ENCODE measurements at regions of chr2 and their contacts with region 1.

Region 1: DNA sequence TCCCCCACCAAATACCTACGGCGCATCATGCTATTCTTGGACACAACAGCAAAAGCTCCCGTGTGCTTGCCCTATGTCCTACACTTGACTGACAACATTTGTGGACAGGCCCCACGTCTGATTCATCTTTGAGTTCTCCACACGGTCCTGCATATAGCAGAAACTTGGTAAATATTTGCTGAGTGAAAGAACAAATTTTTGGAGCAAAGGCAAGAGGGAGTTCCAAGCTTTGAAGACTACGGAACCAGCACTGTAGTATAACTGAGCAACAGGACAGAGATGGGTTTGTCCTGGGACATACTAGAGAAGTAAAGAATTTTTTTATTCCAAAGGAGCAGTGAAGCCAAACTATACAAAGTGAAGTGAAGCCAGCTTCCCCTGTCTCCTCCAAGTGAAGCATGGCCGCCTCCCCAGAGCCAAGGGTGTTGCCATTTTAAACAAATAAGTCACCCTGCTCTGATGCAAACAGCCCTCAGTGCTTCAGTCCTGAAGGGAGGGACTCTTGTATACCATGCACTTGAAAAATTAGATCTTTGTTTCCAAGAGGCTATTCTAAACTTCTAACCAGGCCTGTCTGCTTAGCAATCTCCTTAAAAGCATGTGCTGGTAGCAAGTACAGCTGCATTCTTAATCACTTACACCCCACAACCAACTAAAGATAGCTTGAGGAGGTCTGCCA is 35.9 kb downstream of the SPRED2 start:
- DNase-seq: no peak
- ATAC-seq: peak in 2 of 4 donors; percentile 47 to 59
- H3K4me3 ChIP-seq: no peak overlapping the region
- H3K27ac ChIP-seq: no peak overlapping the region
- H3K4me1 ChIP-seq: peaks cover 9% of the 10 kb centered on the region
- H3K27me3 ChIP-seq: no peaks in the 10 kb centered on the region
- CTCF ChIP-seq: no peak

Region 2: GRCh38 chr2:64812285-64812684 is 584.2 kb before region 1 on chr2:
- intact Hi-C with region 1: no loop called
- DNase-seq: no peak
- ATAC-seq: no peak
- H3K4me3 ChIP-seq: no peak overlapping the region
- H3K27ac ChIP-seq: no peak overlapping the region
- H3K4me1 ChIP-seq: no peaks in the 10 kb centered on the region
- H3K27me3 ChIP-seq: no peaks in the 10 kb centered on the region
- CTCF ChIP-seq: no peak

Region 3: GRCh38 chr2:65264821-65265670 is 131.4 kb before region 1 on chr2:
- intact Hi-C with region 1: no loop called
- DNase-seq: no peak
- ATAC-seq: peak; percentile 49 to 80 (median 70)
- H3K4me3 ChIP-seq: no peak overlapping the region
- H3K27ac ChIP-seq: no peak overlapping the region
- H3K4me1 ChIP-seq: peaks cover 4% of the 10 kb centered on the region
- H3K27me3 ChIP-seq: no peaks in the 10 kb centered on the region
- CTCF ChIP-seq: peak; percentile 73

Region 4: GRCh38 chr2:65345631-65346030 is 50.9 kb before region 1 on chr2:
- intact Hi-C with region 1: loop called in 1 of 2 experiments (anchors 2 kb)
- DNase-seq: no peak
- ATAC-seq: no peak
- H3K4me3 ChIP-seq: no peak overlapping the region
- H3K27ac ChIP-seq: no peak overlapping the region
- H3K4me1 ChIP-seq: peaks cover 11% of the 10 kb centered on the region
- H3K27me3 ChIP-seq: no peaks in the 10 kb centered on the region
- CTCF ChIP-seq: no peak